GM12878 (cell line): ENCODE measurements at regions of chr13 and their contacts with region 1.

Region 1: GRCh38 chr13:49627831-49628652 is at the start of gene ARL11:
- DNase-seq: peak; percentile 39
- ATAC-seq: peak; percentile 95
- H3K4me3 ChIP-seq: peak within 1 kb of the TSS; percentile 81
- H3K27ac ChIP-seq: peak within 1 kb of the TSS; percentile 64
- H3K4me1 ChIP-seq: peaks cover 3% of the 10 kb centered on the region; the same call in 1 of the 2 replicates
- H3K27me3 ChIP-seq: no peaks in the 10 kb centered on the region
- CTCF ChIP-seq: no peak
- EP300 ChIP-seq: no peak
- POLR2A ChIP-seq: peak; percentile 83
- RAD21 ChIP-seq: no peak
- polyA plus RNA-seq, gene ARL11: 2.0 to 2.6 TPM

Region 2: DNA sequence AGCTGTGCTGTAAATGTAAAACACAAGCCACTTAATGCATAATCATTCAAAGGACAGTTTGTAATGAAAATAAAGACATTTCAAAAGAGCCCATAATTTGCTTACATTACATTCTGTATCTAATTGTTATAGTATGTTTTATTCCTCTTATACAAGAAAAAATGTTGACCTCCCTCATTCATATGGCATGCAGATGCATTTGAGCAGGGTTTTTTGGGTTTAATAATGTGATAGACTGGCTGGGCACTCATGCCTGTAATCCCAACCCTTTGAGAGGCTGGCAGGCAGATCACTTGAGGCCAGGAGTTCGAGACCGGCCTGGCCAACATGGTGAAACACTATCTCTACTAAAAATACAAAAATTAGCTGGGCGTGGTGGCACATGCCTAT is 11.4 kb before region 1 on chr13:
- CTCF ChIA-PET with region 1: interaction called, 7 read pairs
- POLR2A ChIA-PET with region 1: no interaction called
- RAD21 ChIA-PET with region 1: interaction called, 6 read pairs
- SMC1A ChIA-PET with region 1: interaction called, 11 read pairs
- in situ Hi-C with region 1: no loop called
- intact Hi-C with region 1: no loop called
- DNase-seq: no peak
- ATAC-seq: no peak
- H3K4me3 ChIP-seq: no peak overlapping the region
- H3K27ac ChIP-seq: no peak overlapping the region
- H3K4me1 ChIP-seq: no peaks in the 10 kb centered on the region
- H3K27me3 ChIP-seq: no peaks in the 10 kb centered on the region
- CTCF ChIP-seq: no peak
- EP300 ChIP-seq: no peak
- POLR2A ChIP-seq: no peak
- RAD21 ChIP-seq: no peak